ENCODE measurements at regions of chr6 and their contacts with region 1.

Region 1: GRCh38 chr6:25490018-25490801 is 161.8 kb upstream of the SCGN start:
- DNase-seq: peak; percentile 69
- CTCF ChIP-seq: peak; percentile 85

Region 2: GRCh38 chr6:24779408-24780016 is 710.7 kb before region 1 on chr6:
- in situ Hi-C with region 1: no loop called
- DNase-seq: peak; percentile 55
- CTCF ChIP-seq: no peak

Region 3: GRCh38 chr6:24949020-24949569 is 541.1 kb before region 1 on chr6:
- in situ Hi-C with region 1: no loop called
- DNase-seq: peak; percentile 50
- CTCF ChIP-seq: no peak

Region 4: GRCh38 chr6:25279748-25280343 is 210.4 kb before region 1 on chr6:
- in situ Hi-C with region 1: loop called (anchors 5 kb)
- DNase-seq: peak; percentile 62
- CTCF ChIP-seq: no peak

Region 5: GRCh38 chr6:25449774-25450173 is 40.4 kb before region 1 on chr6:
- in situ Hi-C with region 1: no loop called
- DNase-seq: no peak
- CTCF ChIP-seq: no peak

Measured in GM13976 (cell line).